ENCODE measurements at regions of chr6 and their contacts with region 1.

Region 1: DNA sequence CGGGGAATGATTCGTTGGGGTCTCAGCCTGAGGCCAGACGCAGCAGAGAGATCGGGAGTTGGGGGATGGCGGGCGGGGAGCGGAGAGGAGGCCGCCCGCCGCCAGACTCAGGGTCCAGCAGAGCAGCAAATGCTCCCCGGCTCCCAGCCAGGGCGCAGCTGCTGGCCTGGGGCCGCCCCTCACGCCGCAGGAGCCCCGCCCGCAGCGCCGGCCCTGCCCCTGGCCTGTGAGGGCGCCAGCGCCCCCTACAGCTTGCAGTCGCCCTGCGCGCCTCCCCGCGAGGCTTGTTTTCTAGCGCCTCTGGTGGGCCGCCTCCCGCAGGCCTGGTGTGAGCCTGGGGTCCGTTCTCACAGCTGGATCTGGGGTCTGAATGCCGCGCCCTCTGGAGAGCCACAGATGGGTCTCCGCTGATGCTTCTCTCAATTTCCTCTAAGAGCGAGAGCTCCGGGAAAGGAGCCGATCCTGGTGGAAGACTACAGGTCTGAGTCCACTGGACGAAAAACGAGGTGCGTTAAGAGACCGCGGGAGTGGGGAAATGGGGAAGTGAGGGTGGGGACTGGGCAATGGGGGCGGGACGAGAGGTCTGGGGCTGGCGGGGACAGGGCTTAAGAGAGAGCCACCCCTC is 29.9 kb downstream of the TRIM38 start:
- DNase-seq: peak; percentile 94
- ATAC-seq: peak; percentile 96
- H3K4me3 Mint-ChIP-seq: peak overlapping the region; percentile 96
- H3K27ac Mint-ChIP-seq: peak overlapping the region; percentile 96
- H3K4me1 Mint-ChIP-seq: peaks cover 29% of the 10 kb centered on the region
- H3K27me3 Mint-ChIP-seq: no peaks in the 10 kb centered on the region

Region 2: GRCh38 chr6:25717866-25718740 is 274.4 kb before region 1 on chr6:
- CTCF ChIA-PET with region 1: interaction called, 11 read pairs
- POLR2A ChIA-PET with region 1: no interaction called
- DNase-seq: no peak
- ATAC-seq: no peak
- H3K4me3 Mint-ChIP-seq: no peak overlapping the region
- H3K27ac Mint-ChIP-seq: no peak overlapping the region
- H3K4me1 Mint-ChIP-seq: no peaks in the 10 kb centered on the region
- H3K27me3 Mint-ChIP-seq: peaks cover 19% of the 10 kb centered on the region

Region 3: DNA sequence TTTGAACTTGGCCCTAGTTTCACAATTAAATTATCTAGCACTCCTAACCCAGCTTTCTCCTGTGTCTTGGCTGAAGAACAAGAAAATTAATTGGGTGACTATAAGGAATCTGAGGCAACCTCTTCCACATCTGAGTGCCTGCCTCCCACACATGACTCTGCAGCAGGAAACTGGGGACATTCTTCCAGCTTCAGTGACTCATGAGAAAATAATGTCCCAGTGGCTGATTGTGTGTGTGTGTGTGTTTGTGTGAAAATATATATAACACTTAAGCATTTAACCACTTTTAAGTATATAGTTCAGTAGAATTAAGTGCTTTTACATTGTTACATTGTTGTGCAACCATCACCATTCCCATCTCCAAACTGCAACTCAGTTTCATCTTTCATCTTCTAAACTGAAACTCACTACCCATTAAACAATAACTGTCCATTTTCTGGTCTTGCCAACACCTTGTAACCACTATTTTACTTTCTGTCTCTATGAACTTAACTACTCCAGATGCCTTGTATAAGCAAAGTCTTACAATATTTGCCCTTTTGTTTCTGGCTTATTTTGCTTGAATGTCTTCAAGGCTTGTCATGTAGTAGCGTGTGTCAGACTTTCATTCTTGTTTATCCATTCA is 21.2 kb before region 1 on chr6:
- CTCF ChIA-PET with region 1: interaction called, 74 read pairs
- POLR2A ChIA-PET with region 1: no interaction called
- DNase-seq: no peak
- ATAC-seq: no peak
- H3K4me3 Mint-ChIP-seq: no peak overlapping the region
- H3K27ac Mint-ChIP-seq: no peak overlapping the region
- H3K4me1 Mint-ChIP-seq: peaks cover 46% of the 10 kb centered on the region
- H3K27me3 Mint-ChIP-seq: no peaks in the 10 kb centered on the region

Region 4: GRCh38 chr6:26003102-26003694 is 10.7 kb after region 1 on chr6:
- CTCF ChIA-PET with region 1: interaction called, 79 read pairs
- POLR2A ChIA-PET with region 1: interaction called, 7 read pairs
- DNase-seq: peak; percentile 61
- ATAC-seq: peak; percentile 44
- H3K4me3 Mint-ChIP-seq: no peak overlapping the region
- H3K27ac Mint-ChIP-seq: no peak overlapping the region
- H3K4me1 Mint-ChIP-seq: peaks cover 8% of the 10 kb centered on the region
- H3K27me3 Mint-ChIP-seq: no peaks in the 10 kb centered on the region

Region 5: DNA sequence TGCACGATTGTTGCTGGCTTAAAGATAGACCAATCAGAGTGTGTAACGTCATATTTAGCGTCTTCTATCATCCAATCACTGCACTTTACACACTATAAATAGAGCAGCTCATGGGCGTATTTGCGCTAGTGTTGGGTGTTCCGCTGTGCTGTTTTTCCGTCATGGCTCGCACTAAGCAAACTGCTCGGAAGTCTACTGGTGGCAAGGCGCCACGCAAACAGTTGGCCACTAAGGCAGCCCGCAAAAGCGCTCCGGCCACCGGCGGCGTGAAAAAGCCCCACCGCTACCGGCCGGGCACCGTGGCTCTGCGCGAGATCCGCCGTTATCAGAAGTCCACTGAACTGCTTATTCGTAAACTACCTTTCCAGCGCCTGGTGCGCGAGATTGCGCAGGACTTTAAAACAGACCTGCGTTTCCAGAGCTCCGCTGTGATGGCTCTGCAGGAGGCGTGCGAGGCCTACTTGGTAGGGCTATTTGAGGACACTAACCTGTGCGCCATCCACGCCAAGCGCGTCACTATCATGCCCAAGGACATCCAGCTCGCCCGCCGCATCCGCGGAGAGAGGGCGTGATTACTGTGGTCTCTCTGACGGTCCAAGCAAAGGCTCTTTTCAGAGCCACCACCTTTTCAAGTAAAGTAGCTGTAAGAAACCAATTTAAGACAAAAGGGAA is 27.9 kb after region 1 on chr6:
- CTCF ChIA-PET with region 1: interaction called, 57 read pairs
- POLR2A ChIA-PET with region 1: interaction called, 65 read pairs
- DNase-seq: peak; percentile 88
- ATAC-seq: peak; percentile 51
- H3K4me3 Mint-ChIP-seq: peak overlapping the region; percentile 96
- H3K27ac Mint-ChIP-seq: peak overlapping the region; percentile 100
- H3K4me1 Mint-ChIP-seq: peaks cover 65% of the 10 kb centered on the region
- H3K27me3 Mint-ChIP-seq: no peaks in the 10 kb centered on the region

Measured in activated CD8-positive, alpha-beta T cell treated with anti-CD3 and anti-CD28 coated beads, Interleukin-2, amount 10 ng/mL, durations not matched to agents 7 days and 5 days (primary cell).